Heart right ventricle (tissue), 16 donors: ENCODE measurements at regions of chr1 and their contacts with region 1.

Region 1: GRCh38 chr1:88549536-88549935 is 134.5 kb upstream of the PKN2 start:
- DNase-seq: no peak
- ATAC-seq: no peak
- H3K4me3 ChIP-seq: no peak overlapping the region
- H3K27ac ChIP-seq: no peak overlapping the region
- H3K4me1 ChIP-seq: no peaks in the 10 kb centered on the region
- H3K27me3 ChIP-seq: no peaks in the 10 kb centered on the region
- CTCF ChIP-seq: peak in 7 of 9 donors; percentile 25 to 46 (median 33)

Region 2: DNA sequence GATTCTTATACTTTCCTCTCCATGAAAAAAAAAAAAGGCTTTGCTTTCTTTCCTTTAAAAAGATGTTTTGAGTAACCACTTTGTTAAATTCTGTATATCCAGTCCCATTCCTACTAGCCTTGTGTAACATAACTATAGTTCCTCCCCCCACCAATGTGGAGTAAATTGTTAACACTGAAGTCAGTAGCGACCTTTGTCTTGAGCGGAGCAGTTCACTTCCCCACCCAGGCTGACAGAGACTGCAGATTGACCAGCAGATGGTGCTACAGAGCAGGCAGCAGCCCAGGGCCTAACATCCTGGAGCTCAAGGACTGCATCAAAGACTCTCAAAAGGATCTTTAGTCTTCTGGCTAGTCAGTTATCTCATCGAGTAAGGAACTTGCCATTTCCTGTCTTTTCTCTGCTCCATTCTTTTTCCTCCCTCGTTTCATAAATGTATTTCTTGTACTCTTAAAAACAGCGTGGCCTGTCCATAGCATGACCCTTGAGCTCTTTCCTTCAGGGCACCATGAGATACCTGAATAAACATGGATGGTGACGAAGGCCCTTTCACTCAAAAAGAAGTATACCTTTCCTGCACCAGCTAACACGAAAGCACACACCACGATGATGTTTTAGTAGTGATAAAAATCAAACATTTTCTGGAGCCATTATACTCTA is 369.0 kb before region 1 on chr1:
- intact Hi-C with region 1: loop called in 5 of 10 experiments (anchors 5 to 10 kb)
- DNase-seq: peak; percentile 52 to 55
- ATAC-seq: peak; percentile 80 to 94 (median 90)
- H3K4me3 ChIP-seq: no peak overlapping the region
- H3K27ac ChIP-seq: no peak overlapping the region
- H3K4me1 ChIP-seq: no peaks in the 10 kb centered on the region
- H3K27me3 ChIP-seq: peaks cover 0 to 3% (median 0%) of the 10 kb centered on the region in 7 donors
- CTCF ChIP-seq: peak; percentile 72 to 95 (median 92)

Region 3: DNA sequence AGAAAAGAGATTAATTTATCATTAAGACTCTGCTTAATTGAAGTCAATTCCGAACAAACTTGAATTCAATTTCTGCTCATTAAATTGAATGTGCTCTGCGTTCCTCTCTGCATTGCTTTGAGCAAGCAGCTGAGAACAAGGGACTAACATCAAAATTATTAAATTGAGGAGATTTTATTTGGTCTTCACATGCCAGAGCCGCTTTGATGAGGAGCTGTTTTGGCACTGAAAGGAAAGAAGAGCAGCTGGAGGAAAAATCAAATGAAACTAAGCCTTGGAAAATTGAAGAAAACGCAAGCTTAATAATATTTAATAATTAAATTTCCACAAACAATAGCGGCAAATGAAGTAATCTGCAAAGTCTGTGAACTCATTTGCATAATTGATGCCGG is 87.4 kb before region 1 on chr1:
- intact Hi-C with region 1: no loop called
- DNase-seq: no peak
- ATAC-seq: no peak
- H3K4me3 ChIP-seq: peak overlapping the region in 9 of 10 donors; percentile 8 to 54 (median 47)
- H3K27ac ChIP-seq: peak overlapping the region in 2 of 10 donors; percentile 75 to 78
- H3K4me1 ChIP-seq: peaks cover 0 to 6% (median 0%) of the 10 kb centered on the region in 9 donors
- H3K27me3 ChIP-seq: peaks cover 0 to 36% (median 0%) of the 10 kb centered on the region in 7 donors
- CTCF ChIP-seq: no peak

Region 4: GRCh38 chr1:88472298-88472697 is 77.2 kb before region 1 on chr1:
- intact Hi-C with region 1: loop called in 1 of 10 experiments (anchors 10 kb)
- DNase-seq: peak in 1 of 2 donors; percentile 40
- ATAC-seq: peak; percentile 79 to 99 (median 94)
- H3K4me3 ChIP-seq: no peak overlapping the region
- H3K27ac ChIP-seq: peak overlapping the region in 4 of 10 donors; percentile 13 to 44 (median 30)
- H3K4me1 ChIP-seq: peaks cover 0 to 30% (median 5%) of the 10 kb centered on the region in 9 donors
- H3K27me3 ChIP-seq: no peaks in the 10 kb centered on the region
- CTCF ChIP-seq: no peak

Region 5: GRCh38 chr1:88595355-88596002 is 45.9 kb after region 1 on chr1:
- intact Hi-C with region 1: no loop called
- DNase-seq: no peak
- ATAC-seq: no peak
- H3K4me3 ChIP-seq: no peak overlapping the region
- H3K27ac ChIP-seq: no peak overlapping the region
- H3K4me1 ChIP-seq: no peaks in the 10 kb centered on the region
- H3K27me3 ChIP-seq: no peaks in the 10 kb centered on the region
- CTCF ChIP-seq: peak in 6 of 9 donors; percentile 12 to 45 (median 14)